ENCODE measurements at regions of chr9 and their contacts with region 1.

Region 1: GRCh38 chr9:14096258-14096922 is 217.6 kb downstream of the NFIB start:
- DNase-seq: peak; percentile 97
- H3K4me3 ChIP-seq: peak overlapping the region in 1 of 3 experiments; percentile 60
- H3K27ac ChIP-seq: peak overlapping the region; percentile 96
- H3K4me1 ChIP-seq: peaks cover 55% of the 10 kb centered on the region
- H3K27me3 ChIP-seq: no peaks in the 10 kb centered on the region
- CTCF ChIP-seq: no peak
- POLR2A ChIP-seq: peak; percentile 44

Region 2: DNA sequence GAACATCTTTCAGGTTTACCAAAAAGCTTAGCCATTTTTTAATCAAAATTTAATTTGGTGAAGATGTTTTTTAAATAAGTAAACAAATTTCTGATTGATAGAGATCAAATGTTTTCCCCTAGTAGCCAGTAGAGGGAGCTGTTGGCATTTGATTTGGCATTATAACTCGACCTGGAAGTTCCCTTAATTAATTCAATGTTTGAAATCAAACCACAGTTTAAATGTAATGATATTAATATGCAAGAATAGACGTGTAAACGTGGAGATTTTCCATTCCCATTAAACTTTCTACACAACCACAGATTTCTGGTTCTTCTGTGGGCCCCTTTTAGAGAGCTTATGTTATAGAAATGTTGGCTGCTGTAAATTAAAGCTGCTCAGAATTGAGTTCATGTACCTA is 668.8 kb before region 1 on chr9:
- CTCF ChIA-PET with region 1: interaction called, 12 read pairs
- POLR2A ChIA-PET with region 1: no interaction called
- dilution Hi-C with region 1: no loop called
- intact Hi-C with region 1: loop called (anchors 1 kb)
- DNase-seq: peak; percentile 78
- H3K4me3 ChIP-seq: no peak overlapping the region
- H3K27ac ChIP-seq: peak overlapping the region; percentile 34
- H3K4me1 ChIP-seq: peaks cover 6% of the 10 kb centered on the region
- H3K27me3 ChIP-seq: no peaks in the 10 kb centered on the region
- CTCF ChIP-seq: peak; percentile 40 to 43
- POLR2A ChIP-seq: no peak

Region 3: GRCh38 chr9:13750061-13750460 is 346.3 kb before region 1 on chr9:
- CTCF ChIA-PET with region 1: no interaction called
- POLR2A ChIA-PET with region 1: no interaction called
- dilution Hi-C with region 1: no loop called
- intact Hi-C with region 1: loop called (anchors 5 kb)
- DNase-seq: peak; percentile 96
- H3K4me3 ChIP-seq: no peak overlapping the region
- H3K27ac ChIP-seq: peak overlapping the region; percentile 72
- H3K4me1 ChIP-seq: peaks cover 17% of the 10 kb centered on the region
- H3K27me3 ChIP-seq: no peaks in the 10 kb centered on the region
- CTCF ChIP-seq: no peak
- POLR2A ChIP-seq: peak; percentile 49

Region 4: GRCh38 chr9:14107977-14108376 is 11.6 kb after region 1 on chr9:
- CTCF ChIA-PET with region 1: interaction called, 12 read pairs
- POLR2A ChIA-PET with region 1: no interaction called
- dilution Hi-C with region 1: no loop called
- intact Hi-C with region 1: loop called (anchors 1 kb)
- DNase-seq: peak; percentile 95
- H3K4me3 ChIP-seq: no peak overlapping the region
- H3K27ac ChIP-seq: peak overlapping the region; percentile 78
- H3K4me1 ChIP-seq: peaks cover 18% of the 10 kb centered on the region
- H3K27me3 ChIP-seq: no peaks in the 10 kb centered on the region
- CTCF ChIP-seq: no peak
- POLR2A ChIP-seq: no peak

Region 5: GRCh38 chr9:14238552-14238951 is 142.2 kb after region 1 on chr9:
- CTCF ChIA-PET with region 1: interaction called, 3 read pairs
- POLR2A ChIA-PET with region 1: no interaction called
- dilution Hi-C with region 1: no loop called
- intact Hi-C with region 1: loop called (anchors 1 kb)
- DNase-seq: peak; percentile 98
- H3K4me3 ChIP-seq: peak overlapping the region in 1 of 3 experiments; percentile 44
- H3K27ac ChIP-seq: peak overlapping the region; percentile 97
- H3K4me1 ChIP-seq: peaks cover 72% of the 10 kb centered on the region
- H3K27me3 ChIP-seq: no peaks in the 10 kb centered on the region
- CTCF ChIP-seq: no peak
- POLR2A ChIP-seq: peak; percentile 85

Region 6: GRCh38 chr9:14347406-14348122 is 251.2 kb after region 1 on chr9:
- CTCF ChIA-PET with region 1: no interaction called
- POLR2A ChIA-PET with region 1: no interaction called
- dilution Hi-C with region 1: no loop called
- intact Hi-C with region 1: loop called (anchors 1 kb)
- DNase-seq: peak; percentile 60
- H3K4me3 ChIP-seq: peak overlapping the region; percentile 17 to 57 (median 48)
- H3K27ac ChIP-seq: peak overlapping the region; percentile 32
- H3K4me1 ChIP-seq: peaks cover 57% of the 10 kb centered on the region
- H3K27me3 ChIP-seq: no peaks in the 10 kb centered on the region
- CTCF ChIP-seq: no peak
- POLR2A ChIP-seq: peak; percentile 31

Region 7: DNA sequence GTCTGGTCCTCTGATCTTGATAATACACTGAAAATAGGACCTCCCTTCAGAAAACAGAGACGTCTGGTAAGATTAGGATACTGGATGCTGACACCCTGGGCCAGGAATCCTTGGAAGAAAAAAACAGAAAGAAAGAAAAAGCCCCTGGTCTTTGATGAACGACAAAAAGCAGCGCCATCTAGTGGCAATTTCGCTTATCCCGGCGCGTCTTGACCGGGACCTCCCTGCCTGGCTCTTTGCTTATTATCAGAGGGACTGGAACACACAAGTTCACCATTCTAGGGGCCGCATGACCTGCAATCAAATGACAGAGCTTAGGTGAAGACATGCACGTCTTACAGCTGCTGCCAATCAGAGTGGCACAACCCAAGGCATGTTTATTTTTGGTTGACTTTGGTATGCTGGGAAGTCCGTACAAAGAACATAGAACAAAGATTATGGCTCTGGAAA is 332.4 kb after region 1 on chr9:
- CTCF ChIA-PET with region 1: interaction called, 3 read pairs
- POLR2A ChIA-PET with region 1: no interaction called
- dilution Hi-C with region 1: no loop called
- intact Hi-C with region 1: loop called (anchors 5 kb)
- DNase-seq: peak; percentile 68
- H3K4me3 ChIP-seq: no peak overlapping the region
- H3K27ac ChIP-seq: no peak overlapping the region
- H3K4me1 ChIP-seq: peaks cover 15% of the 10 kb centered on the region
- H3K27me3 ChIP-seq: no peaks in the 10 kb centered on the region
- CTCF ChIP-seq: peak; percentile 79 to 84
- POLR2A ChIP-seq: no peak

Measured in endothelial cell of umbilical vein (primary cell).